Natural killer cell (primary cell): ENCODE measurements at regions of chr12 and their contacts with region 1.

Region 1: DNA sequence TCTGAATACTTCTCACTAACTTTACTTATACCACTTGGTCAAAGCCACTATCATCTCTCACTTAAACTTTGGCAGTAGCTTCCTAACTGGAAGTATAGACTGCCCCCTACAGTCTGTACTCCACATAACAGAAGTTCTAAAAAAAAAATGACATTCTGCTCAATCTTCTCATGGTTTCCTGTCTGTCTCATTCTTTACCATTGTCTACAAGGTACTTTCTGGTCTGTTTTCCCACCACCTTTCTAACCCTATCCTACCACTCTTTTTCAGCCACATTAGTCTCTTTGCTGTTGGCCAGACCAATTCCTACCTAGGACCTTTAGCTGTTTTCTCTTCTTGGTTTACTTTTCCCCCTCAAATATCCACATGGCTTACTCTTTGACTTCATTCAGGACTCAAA is 14.7 kb downstream of the CPSF6 start:
- DNase-seq: peak in 1 of 2 donors; percentile 83
- ATAC-seq: peak; percentile 88 to 91 (median 88)
- H3K4me3 ChIP-seq: no peak overlapping the region
- H3K4me3 Mint-ChIP-seq: no peak overlapping the region
- H3K27ac ChIP-seq: peak overlapping the region; percentile 18
- H3K27ac Mint-ChIP-seq: peak overlapping the region; percentile 32 to 66
- H3K4me1 ChIP-seq: no peaks in the 10 kb centered on the region
- H3K4me1 Mint-ChIP-seq: peaks cover 29 to 40% of the 10 kb centered on the region in 2 donors
- H3K27me3 ChIP-seq: no peaks in the 10 kb centered on the region
- H3K27me3 Mint-ChIP-seq: no peaks in the 10 kb centered on the region
- CTCF ChIP-seq: peak; percentile 72

Region 2: DNA sequence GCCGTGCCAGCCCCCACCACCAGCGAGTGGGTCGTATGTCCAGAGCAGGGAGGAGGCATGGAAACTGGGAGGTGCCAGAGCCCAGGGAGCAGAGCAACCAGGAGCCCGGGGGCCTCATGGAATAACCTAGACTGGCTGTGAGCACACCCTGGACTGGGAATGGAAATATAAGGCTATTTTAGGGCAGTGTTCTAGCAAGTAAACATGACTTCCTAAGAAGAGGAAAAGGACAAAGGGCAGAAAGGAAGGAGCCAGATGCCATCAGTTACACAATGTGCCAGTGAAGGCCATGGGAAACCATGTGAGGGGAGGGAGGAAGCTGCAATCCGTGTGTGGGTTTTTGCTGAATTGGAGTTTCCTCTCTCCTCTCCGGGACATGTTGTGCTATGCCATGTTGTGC is 302.4 kb before region 1 on chr12:
- intact Hi-C with region 1: no loop called
- DNase-seq: no peak
- ATAC-seq: no peak
- H3K4me3 ChIP-seq: no peak overlapping the region
- H3K4me3 Mint-ChIP-seq: no peak overlapping the region
- H3K27ac ChIP-seq: no peak overlapping the region
- H3K27ac Mint-ChIP-seq: no peak overlapping the region
- H3K4me1 ChIP-seq: no peaks in the 10 kb centered on the region
- H3K4me1 Mint-ChIP-seq: no peaks in the 10 kb centered on the region
- H3K27me3 ChIP-seq: no peaks in the 10 kb centered on the region
- H3K27me3 Mint-ChIP-seq: peaks cover 8% of the 10 kb centered on the region in 2 donors
- CTCF ChIP-seq: no peak

Region 3: DNA sequence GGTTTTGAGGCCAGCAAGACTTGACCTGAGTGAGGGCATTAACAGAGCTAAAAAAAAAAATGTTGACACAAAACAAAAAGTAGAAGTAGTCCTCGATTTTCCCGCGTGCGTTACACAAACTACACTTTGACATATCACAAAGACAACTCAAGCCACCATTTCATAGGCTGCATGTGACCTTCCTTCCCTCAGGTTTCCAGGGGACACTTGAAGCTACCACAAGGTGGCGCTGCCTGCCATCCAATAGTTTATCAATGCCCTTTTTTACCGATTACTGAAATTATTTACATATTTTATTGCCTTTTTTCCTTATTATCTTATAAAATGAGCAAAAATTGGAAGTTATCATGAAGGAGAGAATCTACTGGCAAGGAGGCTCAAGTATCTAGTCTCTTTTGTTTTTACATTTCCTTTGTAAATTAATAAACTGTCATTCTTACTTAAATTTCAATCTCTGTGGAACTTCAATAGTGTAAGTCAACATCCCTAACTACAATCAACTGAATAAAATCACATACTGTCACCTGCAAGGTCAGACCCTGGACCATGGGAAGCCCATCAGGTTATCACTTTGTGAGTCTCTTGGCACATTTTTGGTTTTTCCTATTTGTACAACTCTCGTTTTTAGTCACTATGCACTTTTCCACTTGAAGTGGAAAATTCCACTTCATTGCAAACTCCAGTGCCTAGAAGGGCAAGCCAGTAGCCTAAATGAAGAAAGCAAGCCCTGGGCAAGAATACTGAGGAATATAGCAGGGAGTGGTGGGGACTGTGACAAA is 99.3 kb before region 1 on chr12:
- intact Hi-C with region 1: loop called (anchors 1 kb)
- DNase-seq: peak; percentile 64 to 91
- ATAC-seq: peak; percentile 56 to 60 (median 59)
- H3K4me3 ChIP-seq: no peak overlapping the region
- H3K4me3 Mint-ChIP-seq: no peak overlapping the region
- H3K27ac ChIP-seq: no peak overlapping the region
- H3K27ac Mint-ChIP-seq: no peak overlapping the region
- H3K4me1 ChIP-seq: peaks cover 7% of the 10 kb centered on the region
- H3K4me1 Mint-ChIP-seq: peaks cover 0 to 6% of the 10 kb centered on the region in 2 donors
- H3K27me3 ChIP-seq: no peaks in the 10 kb centered on the region
- H3K27me3 Mint-ChIP-seq: no peaks in the 10 kb centered on the region
- CTCF ChIP-seq: peak; percentile 94